T-cell (primary cell): ENCODE measurements at regions of chr6 and their contacts with region 1.

Region 1: GRCh38 chr6:169701954-169702839 is at the starts of genes C6orf120 and WDR27:
- DNase-seq: peak; percentile 90 to 97 (median 95)
- ATAC-seq: peak; percentile 87 to 90 (median 90)
- H3K4me3 ChIP-seq: peak within 1 kb of the TSS; percentile 79 to 88
- H3K4me3 Mint-ChIP-seq: peak within 1 kb of the TSS; percentile 89 to 91 (median 89)
- H3K27ac ChIP-seq: peak within 1 kb of the TSS; percentile 93
- H3K27ac Mint-ChIP-seq: peak within 1 kb of the TSS; percentile 88 to 93
- H3K4me1 ChIP-seq: peaks cover 23 to 25% of the 10 kb centered on the region in 2 experiments
- H3K4me1 Mint-ChIP-seq: peaks cover 57 to 70% (median 57%) of the 10 kb centered on the region in 3 donors
- H3K27me3 ChIP-seq: no peaks in the 10 kb centered on the region
- H3K27me3 Mint-ChIP-seq: no peaks in the 10 kb centered on the region
- total RNA-seq, gene C6orf120: 17.6 to 30.7 (median 26.2) TPM
- total RNA-seq, gene WDR27: 39.7 to 71.5 (median 52.5) TPM

Region 2: GRCh38 chr6:169723200-169723909 is 21.2 kb after region 1 on chr6:
- CTCF ChIA-PET with region 1: interaction called, 3 to 5 read pairs
- POLR2A ChIA-PET with region 1: interaction called, 3 to 22 read pairs
- DNase-seq: peak; percentile 42 to 78 (median 62)
- ATAC-seq: peak; percentile 37 to 42 (median 40)
- H3K4me3 ChIP-seq: peak overlapping the region; percentile 83 to 94
- H3K4me3 Mint-ChIP-seq: peak overlapping the region; percentile 93 to 96 (median 93)
- H3K27ac ChIP-seq: peak overlapping the region; percentile 86
- H3K27ac Mint-ChIP-seq: peak overlapping the region; percentile 95 to 96
- H3K4me1 ChIP-seq: peaks cover 5 to 19% of the 10 kb centered on the region in 2 experiments
- H3K4me1 Mint-ChIP-seq: peaks cover 46 to 50% (median 49%) of the 10 kb centered on the region in 3 donors
- H3K27me3 ChIP-seq: no peaks in the 10 kb centered on the region
- H3K27me3 Mint-ChIP-seq: no peaks in the 10 kb centered on the region

Region 3: GRCh38 chr6:169738204-169738975 is 36.2 kb after region 1 on chr6:
- CTCF ChIA-PET with region 1: no interaction called
- POLR2A ChIA-PET with region 1: no interaction called
- DNase-seq: no peak
- ATAC-seq: no peak
- H3K4me3 ChIP-seq: no peak overlapping the region
- H3K4me3 Mint-ChIP-seq: no peak overlapping the region
- H3K27ac ChIP-seq: no peak overlapping the region
- H3K27ac Mint-ChIP-seq: no peak overlapping the region
- H3K4me1 ChIP-seq: no peaks in the 10 kb centered on the region
- H3K4me1 Mint-ChIP-seq: no peaks in the 10 kb centered on the region
- H3K27me3 ChIP-seq: peaks cover 0 to 11% of the 10 kb centered on the region in 2 experiments
- H3K27me3 Mint-ChIP-seq: peaks cover 20 to 23% of the 10 kb centered on the region in 2 donors

Region 4: GRCh38 chr6:169831450-169832246 is 129.5 kb after region 1 on chr6:
- CTCF ChIA-PET with region 1: no interaction called
- POLR2A ChIA-PET with region 1: no interaction called
- DNase-seq: peak in 34 of 35 experiments; percentile 28 to 80 (median 56)
- ATAC-seq: peak; percentile 55 to 75 (median 60)
- H3K4me3 ChIP-seq: no peak overlapping the region
- H3K4me3 Mint-ChIP-seq: no peak overlapping the region
- H3K27ac ChIP-seq: no peak overlapping the region
- H3K27ac Mint-ChIP-seq: no peak overlapping the region
- H3K4me1 ChIP-seq: peaks cover 0 to 6% of the 10 kb centered on the region in 2 experiments
- H3K4me1 Mint-ChIP-seq: peaks cover 0 to 2% (median 0%) of the 10 kb centered on the region in 3 donors
- H3K27me3 ChIP-seq: peaks cover 0 to 36% of the 10 kb centered on the region in 2 experiments
- H3K27me3 Mint-ChIP-seq: peaks cover 33 to 54% of the 10 kb centered on the region in 2 donors

Region 5: GRCh38 chr6:170124833-170125232 is 422.6 kb after region 1 on chr6:
- CTCF ChIA-PET with region 1: no interaction called
- POLR2A ChIA-PET with region 1: no interaction called
- DNase-seq: no peak
- ATAC-seq: no peak
- H3K4me3 ChIP-seq: no peak overlapping the region
- H3K4me3 Mint-ChIP-seq: no peak overlapping the region
- H3K27ac ChIP-seq: no peak overlapping the region
- H3K27ac Mint-ChIP-seq: no peak overlapping the region
- H3K4me1 ChIP-seq: no peaks in the 10 kb centered on the region
- H3K4me1 Mint-ChIP-seq: no peaks in the 10 kb centered on the region
- H3K27me3 ChIP-seq: peaks cover 0 to 15% of the 10 kb centered on the region in 2 experiments
- H3K27me3 Mint-ChIP-seq: peaks cover 4 to 6% of the 10 kb centered on the region in 2 donors